Left lung (tissue), 14 donors: ENCODE measurements at regions of chr20 and their contacts with region 1.

Region 1: DNA sequence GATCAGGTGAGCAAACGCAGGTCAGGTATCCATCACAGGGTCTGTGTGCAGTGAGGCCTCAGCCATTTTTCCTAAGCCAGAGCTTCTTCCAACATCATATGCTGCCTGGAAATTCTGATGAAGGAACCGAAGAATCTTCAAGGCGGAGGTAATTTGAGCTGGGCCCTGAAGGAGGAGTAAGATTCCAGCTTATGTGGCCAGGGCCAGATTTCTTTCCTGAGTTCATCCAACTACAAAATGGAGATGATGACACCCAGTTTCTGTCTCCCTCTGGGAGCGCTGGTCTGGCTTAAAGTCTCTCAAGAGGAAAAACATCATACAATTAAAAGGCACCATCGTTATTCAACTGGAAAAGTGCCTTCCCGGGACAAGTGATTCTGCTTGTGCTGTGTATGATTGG is 6.9 kb upstream of the MANBAL start:
- DNase-seq: no peak
- ATAC-seq: peak; percentile 43
- H3K4me3 ChIP-seq: no peak overlapping the region
- H3K27ac ChIP-seq: no peak overlapping the region
- H3K4me1 ChIP-seq: peaks cover 0 to 3% of the 10 kb centered on the region in 2 donors
- H3K27me3 ChIP-seq: no peaks in the 10 kb centered on the region
- CTCF ChIP-seq: peak in 1 of 2 donors; percentile 11

Region 2: GRCh38 chr20:37123441-37123840 is 159.1 kb before region 1 on chr20:
- intact Hi-C with region 1: no loop called
- DNase-seq: peak in 1 of 4 donors; percentile 39
- ATAC-seq: peak; percentile 62
- H3K4me3 ChIP-seq: no peak overlapping the region
- H3K27ac ChIP-seq: no peak overlapping the region
- H3K4me1 ChIP-seq: no peaks in the 10 kb centered on the region
- H3K27me3 ChIP-seq: no peaks in the 10 kb centered on the region
- CTCF ChIP-seq: no peak

Region 3: DNA sequence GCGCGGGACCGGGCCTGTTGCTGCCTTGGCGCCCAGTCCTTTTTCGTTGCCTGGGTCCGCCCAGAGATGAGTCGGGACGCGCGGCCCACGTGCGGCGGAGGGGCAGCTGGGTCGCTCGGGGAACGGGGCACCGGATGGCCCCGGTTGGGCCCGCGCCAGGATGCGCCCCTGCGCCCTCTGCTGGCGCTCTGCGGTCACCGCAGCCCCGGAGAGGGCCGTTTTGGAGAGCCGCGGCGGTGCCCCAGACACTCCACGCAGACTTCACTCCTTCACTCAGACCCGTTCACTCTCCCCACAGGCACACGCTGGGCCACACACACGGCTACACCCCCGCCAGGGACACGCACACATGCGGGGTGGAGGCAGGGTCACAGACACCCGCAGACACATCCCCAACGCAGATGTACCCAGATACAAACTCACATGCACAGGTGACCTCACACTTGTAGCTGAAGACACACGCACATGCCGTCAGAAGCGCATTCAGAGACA is 102.2 kb after region 1 on chr20:
- intact Hi-C with region 1: loop called in 1 of 2 experiments (anchors 5 kb)
- DNase-seq: peak; percentile 60 to 95 (median 68)
- ATAC-seq: peak; percentile 84
- H3K4me3 ChIP-seq: peak overlapping the region; percentile 29 to 40
- H3K27ac ChIP-seq: no peak overlapping the region
- H3K4me1 ChIP-seq: peaks cover 2 to 40% of the 10 kb centered on the region in 2 donors
- H3K27me3 ChIP-seq: peaks cover 0 to 7% of the 10 kb centered on the region in 2 donors
- CTCF ChIP-seq: peak; percentile 94 to 95

Region 4: GRCh38 chr20:37430788-37431460 is 148.4 kb after region 1 on chr20:
- intact Hi-C with region 1: no loop called
- DNase-seq: no peak
- ATAC-seq: no peak
- H3K4me3 ChIP-seq: no peak overlapping the region
- H3K27ac ChIP-seq: no peak overlapping the region
- H3K4me1 ChIP-seq: no peaks in the 10 kb centered on the region
- H3K27me3 ChIP-seq: peaks cover 0 to 23% of the 10 kb centered on the region in 2 donors
- CTCF ChIP-seq: no peak